ENCODE measurements at regions of chr6 and their contacts with region 1.

Region 1: GRCh38 chr6:44265007-44265721 is at the start of gene NFKBIE:
- DNase-seq: peak; percentile 87 to 96 (median 94)
- ATAC-seq: peak; percentile 82
- H3K4me3 ChIP-seq: peak within 1 kb of the TSS; percentile 90 to 91
- H3K4me3 Mint-ChIP-seq: peak within 1 kb of the TSS; percentile 83
- H3K27ac ChIP-seq: peak within 1 kb of the TSS; percentile 78 to 89
- H3K27ac Mint-ChIP-seq: peak within 1 kb of the TSS; percentile 85
- H3K4me1 ChIP-seq: peaks cover 31% of the 10 kb centered on the region
- H3K4me1 Mint-ChIP-seq: peaks cover 46% of the 10 kb centered on the region
- H3K27me3 ChIP-seq: peaks cover 0 to 8% of the 10 kb centered on the region in 2 experiments
- H3K27me3 Mint-ChIP-seq: peaks cover 8% of the 10 kb centered on the region
- CTCF ChIP-seq: peak; percentile 44
- total RNA-seq, gene NFKBIE: 44.5 to 45.8 TPM

Region 2: GRCh38 chr6:43629505-43630300 is 635.5 kb before region 1 on chr6:
- CTCF ChIA-PET with region 1: no interaction called
- POLR2A ChIA-PET with region 1: no interaction called
- intact Hi-C with region 1: loop called in 1 of 2 experiments (anchors 5 kb)
- DNase-seq: peak; percentile 66 to 96 (median 84)
- ATAC-seq: peak; percentile 51
- H3K4me3 ChIP-seq: peak overlapping the region; percentile 77 to 82
- H3K4me3 Mint-ChIP-seq: peak overlapping the region; percentile 98
- H3K27ac ChIP-seq: peak overlapping the region; percentile 53 to 75
- H3K27ac Mint-ChIP-seq: peak overlapping the region; percentile 95
- H3K4me1 ChIP-seq: peaks cover 15% of the 10 kb centered on the region
- H3K4me1 Mint-ChIP-seq: peaks cover 39% of the 10 kb centered on the region
- H3K27me3 ChIP-seq: no peaks in the 10 kb centered on the region
- H3K27me3 Mint-ChIP-seq: no peaks in the 10 kb centered on the region
- CTCF ChIP-seq: no peak

Region 3: DNA sequence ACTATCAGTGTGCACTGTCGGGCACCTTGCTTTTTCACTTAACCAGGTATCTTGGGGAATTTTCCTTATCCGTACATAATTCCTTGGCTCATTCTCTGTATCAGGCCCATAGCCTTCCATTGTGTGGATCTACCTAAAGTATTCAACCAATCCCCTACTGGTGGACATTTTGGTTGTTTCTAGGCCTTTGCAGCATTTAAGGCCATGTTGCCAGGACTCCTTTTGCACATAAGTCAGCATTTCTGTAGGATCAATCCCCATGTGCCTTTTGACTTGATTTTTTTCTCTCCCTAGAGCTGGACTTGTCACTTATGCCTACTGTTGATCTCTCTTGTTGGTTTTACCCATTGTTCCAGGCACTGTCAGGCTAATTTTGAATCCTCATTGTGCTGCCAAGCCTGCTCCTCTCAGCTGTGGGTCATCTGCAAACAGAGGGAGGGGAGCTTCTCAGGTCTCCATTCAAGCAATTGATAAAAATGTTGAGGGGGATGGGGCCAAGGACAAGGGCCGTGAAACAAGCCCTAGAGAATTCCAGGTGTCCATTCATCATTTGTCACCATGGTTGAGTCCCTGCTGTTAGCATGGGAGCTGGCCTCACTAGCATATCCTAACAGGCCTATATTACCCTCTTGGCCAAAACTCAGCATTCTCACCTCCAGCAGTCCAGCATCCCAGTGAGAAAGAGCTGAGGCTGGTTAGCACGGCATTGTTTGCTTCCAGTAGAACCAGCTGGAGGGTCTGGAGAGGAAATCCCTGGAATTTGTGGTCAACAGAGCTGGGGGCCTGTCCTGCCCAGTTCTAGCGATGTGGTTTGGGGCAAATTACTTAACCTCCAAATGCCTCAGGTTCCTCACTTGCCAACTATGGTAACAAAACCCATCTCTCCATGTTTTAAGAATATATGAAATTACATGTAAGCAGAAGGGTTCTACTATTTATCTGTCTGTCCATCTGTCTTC is 316.4 kb before region 1 on chr6:
- CTCF ChIA-PET with region 1: no interaction called
- POLR2A ChIA-PET with region 1: no interaction called
- intact Hi-C with region 1: no loop called
- DNase-seq: no peak
- ATAC-seq: no peak
- H3K4me3 ChIP-seq: no peak overlapping the region
- H3K4me3 Mint-ChIP-seq: no peak overlapping the region
- H3K27ac ChIP-seq: no peak overlapping the region
- H3K27ac Mint-ChIP-seq: no peak overlapping the region
- H3K4me1 ChIP-seq: no peaks in the 10 kb centered on the region
- H3K4me1 Mint-ChIP-seq: no peaks in the 10 kb centered on the region
- H3K27me3 ChIP-seq: no peaks in the 10 kb centered on the region
- H3K27me3 Mint-ChIP-seq: peaks cover 10% of the 10 kb centered on the region
- CTCF ChIP-seq: no peak

Region 4: GRCh38 chr6:44246663-44247337 is 18.4 kb before region 1 on chr6 and contains the start of gene HSP90AB1:
- CTCF ChIA-PET with region 1: interaction called, 9 read pairs
- POLR2A ChIA-PET with region 1: interaction called, 35 read pairs
- intact Hi-C with region 1: loop called (anchors 1 kb)
- DNase-seq: peak; percentile 89 to 99 (median 94)
- ATAC-seq: peak; percentile 79
- H3K4me3 ChIP-seq: peak within 1 kb of the TSS; percentile 96 to 98
- H3K4me3 Mint-ChIP-seq: peak within 1 kb of the TSS; percentile 99
- H3K27ac ChIP-seq: peak within 1 kb of the TSS; percentile 95 to 96
- H3K27ac Mint-ChIP-seq: peak within 1 kb of the TSS; percentile 98
- H3K4me1 ChIP-seq: peaks cover 26% of the 10 kb centered on the region
- H3K4me1 Mint-ChIP-seq: peaks cover 50% of the 10 kb centered on the region
- H3K27me3 ChIP-seq: no peaks in the 10 kb centered on the region
- H3K27me3 Mint-ChIP-seq: no peaks in the 10 kb centered on the region
- CTCF ChIP-seq: no peak
- total RNA-seq, gene HSP90AB1: 561 to 585 TPM

Region 5: GRCh38 chr6:44312901-44313788 is 48.0 kb after region 1 on chr6 and contains the start of gene AARS2:
- CTCF ChIA-PET with region 1: interaction called, 22 read pairs
- POLR2A ChIA-PET with region 1: no interaction called
- intact Hi-C with region 1: loop called (anchors 1 to 2 kb)
- DNase-seq: peak; percentile 87 to 98 (median 91)
- ATAC-seq: peak; percentile 93
- H3K4me3 ChIP-seq: peak within 1 kb of the TSS; percentile 82 to 92
- H3K4me3 Mint-ChIP-seq: peak within 1 kb of the TSS; percentile 98
- H3K27ac ChIP-seq: peak within 1 kb of the TSS; percentile 66 to 78
- H3K27ac Mint-ChIP-seq: peak within 1 kb of the TSS; percentile 95
- H3K4me1 ChIP-seq: peaks cover 11% of the 10 kb centered on the region
- H3K4me1 Mint-ChIP-seq: peaks cover 13% of the 10 kb centered on the region
- H3K27me3 ChIP-seq: no peaks in the 10 kb centered on the region
- H3K27me3 Mint-ChIP-seq: peaks cover 6% of the 10 kb centered on the region
- CTCF ChIP-seq: peak; percentile 91
- total RNA-seq, gene AARS2: 13.5 to 14.7 TPM

Region 6: GRCh38 chr6:44387346-44388133 is 122.4 kb after region 1 on chr6 and contains the start of gene CDC5L:
- CTCF ChIA-PET with region 1: no interaction called
- POLR2A ChIA-PET with region 1: no interaction called
- intact Hi-C with region 1: loop called (anchors 2 kb)
- DNase-seq: peak; percentile 78 to 99 (median 89)
- ATAC-seq: peak; percentile 83
- H3K4me3 ChIP-seq: peak within 1 kb of the TSS; percentile 67 to 96
- H3K4me3 Mint-ChIP-seq: peak within 1 kb of the TSS; percentile 98
- H3K27ac ChIP-seq: peak within 1 kb of the TSS; percentile 73 to 96
- H3K27ac Mint-ChIP-seq: peak within 1 kb of the TSS; percentile 98
- H3K4me1 ChIP-seq: peaks cover 24% of the 10 kb centered on the region
- H3K4me1 Mint-ChIP-seq: peaks cover 42% of the 10 kb centered on the region
- H3K27me3 ChIP-seq: no peaks in the 10 kb centered on the region
- H3K27me3 Mint-ChIP-seq: no peaks in the 10 kb centered on the region
- CTCF ChIP-seq: no peak
- total RNA-seq, gene CDC5L: 24.1 to 24.4 TPM

Measured in CD8-positive, alpha-beta T cell (primary cell).